Naive thymus-derived CD4-positive, alpha-beta T cell (primary cell): ENCODE measurements at regions of chr9 and their contacts with region 1.

Region 1: GRCh38 chr9:85610074-85610860 is 131.5 kb downstream of the AGTPBP1 start:
- DNase-seq: peak in 7 of 9 donors; percentile 37 to 70 (median 63)
- ATAC-seq: peak; percentile 94
- H3K4me3 ChIP-seq: no peak overlapping the region
- H3K4me3 Mint-ChIP-seq: peak overlapping the region in 7 of 10 donors; percentile 1 to 66 (median 56)
- H3K27ac ChIP-seq: no peak overlapping the region
- H3K27ac Mint-ChIP-seq: peak overlapping the region in 7 of 9 donors; percentile 5 to 86 (median 68)
- H3K4me1 ChIP-seq: no peaks in the 10 kb centered on the region
- H3K4me1 Mint-ChIP-seq: peaks cover 0 to 25% (median 9%) of the 10 kb centered on the region in 7 donors
- H3K27me3 ChIP-seq: no peaks in the 10 kb centered on the region
- H3K27me3 Mint-ChIP-seq: no peaks in the 10 kb centered on the region

Region 2: GRCh38 chr9:83937911-83938323 is 1672.3 kb before region 1 on chr9:
- CTCF ChIA-PET with region 1: no interaction called
- POLR2A ChIA-PET with region 1: no interaction called
- intact Hi-C with region 1: loop called in 1 of 2 experiments (anchors 5 kb)
- DNase-seq: peak in 7 of 9 donors; percentile 44 to 74 (median 66)
- ATAC-seq: peak; percentile 84
- H3K4me3 ChIP-seq: no peak overlapping the region
- H3K4me3 Mint-ChIP-seq: no peak overlapping the region
- H3K27ac ChIP-seq: no peak overlapping the region
- H3K27ac Mint-ChIP-seq: no peak overlapping the region
- H3K4me1 ChIP-seq: no peaks in the 10 kb centered on the region
- H3K4me1 Mint-ChIP-seq: peaks cover 0 to 19% (median 0%) of the 10 kb centered on the region in 7 donors
- H3K27me3 ChIP-seq: no peaks in the 10 kb centered on the region
- H3K27me3 Mint-ChIP-seq: no peaks in the 10 kb centered on the region

Region 3: GRCh38 chr9:85425153-85425611 is 185.1 kb before region 1 on chr9:
- CTCF ChIA-PET with region 1: no interaction called
- POLR2A ChIA-PET with region 1: no interaction called
- intact Hi-C with region 1: loop called in 1 of 2 experiments (anchors 5 kb)
- DNase-seq: peak in 2 of 9 donors; percentile 12 to 62
- ATAC-seq: peak; percentile 54
- H3K4me3 ChIP-seq: no peak overlapping the region
- H3K4me3 Mint-ChIP-seq: no peak overlapping the region
- H3K27ac ChIP-seq: no peak overlapping the region
- H3K27ac Mint-ChIP-seq: no peak overlapping the region
- H3K4me1 ChIP-seq: no peaks in the 10 kb centered on the region
- H3K4me1 Mint-ChIP-seq: peaks cover 0 to 11% (median 0%) of the 10 kb centered on the region in 7 donors
- H3K27me3 ChIP-seq: no peaks in the 10 kb centered on the region
- H3K27me3 Mint-ChIP-seq: peaks cover 9 to 42% (median 33%) of the 10 kb centered on the region in 5 donors

Region 4: DNA sequence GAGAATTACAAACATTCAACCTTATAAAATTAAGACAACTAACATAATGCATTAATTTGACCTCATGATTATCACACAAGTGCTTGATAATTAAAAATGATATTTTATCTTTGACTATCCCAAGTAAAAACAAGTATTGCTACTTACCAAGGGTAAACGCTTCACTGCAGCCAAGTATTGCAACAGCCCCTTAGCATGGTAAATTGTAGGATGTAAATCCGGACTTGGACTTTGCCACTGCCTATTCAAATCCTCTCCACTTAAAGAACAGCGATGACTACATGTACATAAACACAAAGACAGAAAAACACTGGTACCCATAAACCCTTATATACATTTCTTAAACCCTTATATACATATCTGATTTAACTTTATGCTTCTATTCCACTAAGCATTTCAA is 23.6 kb before region 1 on chr9:
- CTCF ChIA-PET with region 1: interaction called, 4 read pairs
- POLR2A ChIA-PET with region 1: no interaction called
- intact Hi-C with region 1: loop called in 1 of 2 experiments (anchors 2 kb)
- DNase-seq: no peak
- ATAC-seq: no peak
- H3K4me3 ChIP-seq: no peak overlapping the region
- H3K4me3 Mint-ChIP-seq: no peak overlapping the region
- H3K27ac ChIP-seq: no peak overlapping the region
- H3K27ac Mint-ChIP-seq: no peak overlapping the region
- H3K4me1 ChIP-seq: no peaks in the 10 kb centered on the region
- H3K4me1 Mint-ChIP-seq: peaks cover 0 to 3% (median 0%) of the 10 kb centered on the region in 7 donors
- H3K27me3 ChIP-seq: no peaks in the 10 kb centered on the region
- H3K27me3 Mint-ChIP-seq: no peaks in the 10 kb centered on the region